Common myeloid progenitor, CD34-positive (primary cell): ENCODE measurements at regions of chr14 and their contacts with region 1.

Region 1: DNA sequence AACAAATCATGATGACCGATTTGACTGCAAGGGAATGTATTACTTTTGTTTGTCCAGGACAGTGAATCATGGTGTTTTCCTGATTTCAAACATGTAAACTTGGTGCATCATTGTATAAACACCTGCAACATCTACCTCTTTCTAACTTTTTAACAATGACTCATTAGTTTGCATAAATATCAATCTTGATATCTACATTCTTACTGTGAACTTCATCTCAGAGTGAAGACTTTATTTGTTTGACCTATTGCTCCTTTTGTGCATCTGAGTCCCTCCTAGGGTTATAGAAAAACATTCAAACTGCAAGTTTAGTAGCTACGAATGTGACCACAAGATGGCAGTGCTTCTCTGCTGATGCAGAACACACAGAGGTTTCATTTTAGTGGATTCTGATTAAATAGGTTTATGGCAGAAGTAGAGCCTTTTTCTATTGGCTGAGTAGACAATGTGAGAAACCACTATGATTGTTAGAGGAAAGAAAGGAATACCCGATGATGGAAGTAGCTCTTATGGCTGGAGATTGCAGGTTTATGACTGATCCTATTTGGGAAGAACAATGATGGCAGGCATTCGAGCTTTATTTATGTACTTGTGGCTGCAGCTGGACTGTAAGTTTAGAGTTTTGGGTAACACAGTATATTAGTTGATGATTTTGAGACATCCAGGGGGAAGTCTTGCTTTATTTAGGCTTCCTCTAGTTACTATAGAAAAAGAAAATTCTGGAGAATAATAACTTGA is 244.2 kb upstream of the OR4E1 start:
- DNase-seq: peak; percentile 76 to 85 (median 81)
- H3K4me3 ChIP-seq: peak overlapping the region in 3 of 7 experiments; percentile 28 to 63 (median 58)
- H3K27ac ChIP-seq: no peak overlapping the region
- H3K4me1 ChIP-seq: peaks cover 7 to 21% (median 11%) of the 10 kb centered on the region in 4 experiments
- H3K27me3 ChIP-seq: no peaks in the 10 kb centered on the region

Region 2: GRCh38 chr14:21860172-21860571 is 57.7 kb before region 1 on chr14:
- CTCF ChIA-PET with region 1: interaction called, 16 read pairs
- POLR2A ChIA-PET with region 1: no interaction called
- DNase-seq: peak; percentile 55 to 68 (median 56)
- H3K4me3 ChIP-seq: no peak overlapping the region
- H3K27ac ChIP-seq: no peak overlapping the region
- H3K4me1 ChIP-seq: no peaks in the 10 kb centered on the region
- H3K27me3 ChIP-seq: no peaks in the 10 kb centered on the region

Region 3: DNA sequence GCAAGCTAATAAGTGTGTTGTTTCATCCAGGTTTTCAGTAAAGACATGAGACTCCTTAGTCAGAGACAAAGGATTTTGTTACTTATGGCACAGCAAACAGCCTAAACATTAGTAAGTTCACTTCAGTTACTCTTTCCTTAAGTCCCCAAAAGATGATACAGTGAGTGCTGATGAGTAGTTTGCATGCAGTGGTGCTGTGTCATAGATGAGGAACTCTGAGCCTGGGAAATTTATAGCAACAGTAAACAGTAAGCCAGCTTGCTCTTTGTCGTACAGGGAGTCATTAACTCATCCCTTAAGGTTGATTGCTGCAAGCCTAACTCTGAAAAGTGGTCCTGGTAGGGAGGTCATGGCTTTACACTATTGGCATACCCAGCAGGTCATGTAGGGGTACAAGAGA is 35.6 kb before region 1 on chr14:
- CTCF ChIA-PET with region 1: interaction called, 10 read pairs
- POLR2A ChIA-PET with region 1: no interaction called
- DNase-seq: no peak
- H3K4me3 ChIP-seq: no peak overlapping the region
- H3K27ac ChIP-seq: no peak overlapping the region
- H3K4me1 ChIP-seq: peaks cover 0 to 2% (median 0%) of the 10 kb centered on the region in 4 experiments
- H3K27me3 ChIP-seq: no peaks in the 10 kb centered on the region

Region 4: GRCh38 chr14:21902650-21903103 is 15.2 kb before region 1 on chr14:
- CTCF ChIA-PET with region 1: interaction called, 27 read pairs
- POLR2A ChIA-PET with region 1: no interaction called
- DNase-seq: peak; percentile 30 to 73 (median 49)
- H3K4me3 ChIP-seq: peak overlapping the region in 5 of 7 experiments; percentile 14 to 64 (median 32)
- H3K27ac ChIP-seq: no peak overlapping the region
- H3K4me1 ChIP-seq: peaks cover 4 to 8% (median 5%) of the 10 kb centered on the region in 4 experiments
- H3K27me3 ChIP-seq: no peaks in the 10 kb centered on the region